ENCODE measurements at regions of chr12 and their contacts with region 1.

Region 1: GRCh38 chr12:116599285-116600136 is 40.3 kb downstream of the MAP1LC3B2 start:
- DNase-seq: peak; percentile 73
- H3K4me3 ChIP-seq: peak overlapping the region in 2 of 3 experiments; percentile 0 to 38
- H3K27ac ChIP-seq: peak overlapping the region; percentile 30
- H3K4me1 ChIP-seq: peaks cover 10% of the 10 kb centered on the region
- H3K27me3 ChIP-seq: no peaks in the 10 kb centered on the region
- CTCF ChIP-seq: peak; percentile 42 to 73
- POLR2A ChIP-seq: no peak

Region 2: DNA sequence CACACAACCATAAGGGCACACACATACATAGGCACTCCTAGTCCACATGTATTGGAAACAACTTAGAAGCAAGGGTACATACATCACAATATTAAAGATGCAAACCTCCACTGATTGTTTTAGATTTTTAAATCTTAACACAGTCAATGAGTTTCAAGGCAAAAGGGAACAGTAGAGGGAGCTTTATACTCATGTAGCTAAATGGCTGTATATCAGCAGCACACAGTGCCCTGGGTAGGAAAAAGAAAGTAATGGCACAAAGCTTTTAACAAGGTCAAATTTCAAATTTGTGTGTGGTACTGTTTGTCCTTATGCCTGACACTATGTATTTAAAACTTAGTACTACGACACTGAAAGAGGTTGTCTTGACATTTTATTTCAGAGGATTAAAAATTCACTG is 584.0 kb before region 1 on chr12:
- CTCF ChIA-PET with region 1: interaction called, 17 read pairs
- POLR2A ChIA-PET with region 1: no interaction called
- dilution Hi-C with region 1: no loop called
- intact Hi-C with region 1: loop called (anchors 5 kb)
- DNase-seq: peak; percentile 64
- H3K4me3 ChIP-seq: no peak overlapping the region
- H3K27ac ChIP-seq: no peak overlapping the region
- H3K4me1 ChIP-seq: no peaks in the 10 kb centered on the region
- H3K27me3 ChIP-seq: no peaks in the 10 kb centered on the region
- CTCF ChIP-seq: peak; percentile 21 to 34
- POLR2A ChIP-seq: no peak

Region 3: DNA sequence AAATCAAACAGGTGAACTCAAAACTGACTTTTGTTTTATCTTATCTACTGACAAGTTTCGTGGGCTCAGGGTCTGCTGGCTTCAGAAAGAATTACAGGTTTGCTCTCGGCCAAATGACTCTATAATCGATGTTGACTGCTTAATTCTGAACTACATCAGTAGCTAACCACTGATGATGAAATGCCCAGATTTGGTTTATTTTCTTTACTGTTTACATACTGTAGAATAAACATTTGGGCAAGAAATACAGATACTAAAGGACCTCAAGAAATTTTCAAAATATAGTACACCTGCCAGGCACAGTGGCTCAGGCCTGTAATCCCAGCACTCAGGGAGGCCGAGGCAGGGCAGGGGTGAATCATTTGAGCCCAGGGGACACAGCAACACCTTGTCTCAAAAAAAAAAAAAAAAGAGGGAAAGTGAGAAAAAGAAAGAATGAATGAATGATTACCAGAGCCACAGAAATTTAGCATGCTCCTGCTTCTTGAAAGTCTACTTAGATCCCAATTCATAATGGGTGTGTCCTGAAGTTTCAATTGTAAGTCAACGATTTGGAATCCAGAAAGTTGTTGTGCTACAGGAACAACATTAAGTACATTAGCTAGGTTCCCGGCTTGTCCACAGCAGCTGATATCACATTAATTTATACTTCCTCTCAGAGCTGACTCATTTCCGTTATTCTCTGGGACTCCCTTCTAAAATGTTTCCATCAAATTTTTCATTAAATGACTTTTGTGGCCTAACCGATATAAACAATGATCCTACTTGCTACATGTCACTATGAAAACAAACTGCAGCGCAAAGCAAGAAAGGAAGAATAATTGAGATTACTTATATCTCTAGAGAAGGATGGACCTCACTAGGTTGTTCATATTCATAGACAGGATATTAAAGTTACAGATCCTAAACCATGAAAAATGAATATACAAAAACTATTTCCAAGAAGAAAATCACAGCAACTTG is 456.3 kb before region 1 on chr12:
- CTCF ChIA-PET with region 1: interaction called, 36 read pairs
- POLR2A ChIA-PET with region 1: no interaction called
- dilution Hi-C with region 1: no loop called
- intact Hi-C with region 1: loop called (anchors 1 kb)
- DNase-seq: peak; percentile 97
- H3K4me3 ChIP-seq: peak overlapping the region in 1 of 3 experiments; percentile 18
- H3K27ac ChIP-seq: peak overlapping the region; percentile 99
- H3K4me1 ChIP-seq: peaks cover 28% of the 10 kb centered on the region
- H3K27me3 ChIP-seq: no peaks in the 10 kb centered on the region
- CTCF ChIP-seq: no peak
- POLR2A ChIP-seq: peak; percentile 25

Region 4: GRCh38 chr12:116455540-116456329 is 143.8 kb before region 1 on chr12:
- CTCF ChIA-PET with region 1: interaction called, 3 read pairs
- POLR2A ChIA-PET with region 1: no interaction called
- dilution Hi-C with region 1: no loop called
- intact Hi-C with region 1: loop called (anchors 1 kb)
- DNase-seq: peak; percentile 98
- H3K4me3 ChIP-seq: peak overlapping the region in 2 of 3 experiments; percentile 14 to 15
- H3K27ac ChIP-seq: peak overlapping the region; percentile 96
- H3K4me1 ChIP-seq: peaks cover 17% of the 10 kb centered on the region
- H3K27me3 ChIP-seq: no peaks in the 10 kb centered on the region
- CTCF ChIP-seq: no peak
- POLR2A ChIP-seq: no peak

Region 5: DNA sequence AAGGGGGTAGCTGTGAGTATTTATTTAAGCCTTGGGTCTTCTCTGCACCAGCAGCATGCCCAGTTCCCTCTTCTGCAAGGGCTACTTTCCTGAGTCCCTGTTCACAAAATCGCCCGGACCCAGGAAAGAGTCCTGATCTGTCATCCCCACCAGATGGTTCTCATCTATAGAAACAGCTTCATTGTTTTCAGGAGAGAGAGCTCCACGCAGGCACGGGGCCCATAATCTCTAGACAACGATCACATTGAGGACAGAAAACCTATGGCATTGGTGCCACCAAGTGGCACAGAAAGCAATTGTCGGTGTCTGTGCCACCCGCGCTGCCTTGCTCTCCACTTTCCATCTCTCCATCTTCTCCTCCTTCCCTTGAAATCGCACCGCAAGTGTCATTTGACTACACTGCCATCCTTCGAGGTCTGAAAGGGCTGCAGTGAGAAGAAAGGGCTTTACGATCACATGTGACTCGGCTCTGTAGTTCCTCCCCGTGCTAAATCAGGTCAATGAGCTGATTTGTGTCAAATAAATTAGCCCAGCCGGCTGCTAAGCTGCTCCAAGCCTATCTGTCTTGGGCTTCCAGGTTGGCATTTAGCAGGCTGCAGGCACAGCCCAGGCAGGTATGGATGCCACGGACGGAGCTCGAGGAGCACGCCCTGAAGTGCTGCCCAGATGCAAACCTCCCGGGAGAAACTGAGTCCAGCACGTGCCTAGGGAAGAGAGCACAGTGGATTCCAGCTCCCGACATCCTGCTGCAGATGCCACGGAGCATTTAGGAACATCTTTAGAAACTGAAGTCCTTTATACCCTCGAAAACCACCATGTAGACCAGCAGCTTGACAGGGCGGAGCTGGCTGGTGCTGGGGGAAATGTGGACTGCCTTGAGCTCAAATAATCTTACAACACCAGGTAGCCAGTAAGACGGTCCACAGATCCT is 109.6 kb after region 1 on chr12:
- CTCF ChIA-PET with region 1: no interaction called
- POLR2A ChIA-PET with region 1: no interaction called
- dilution Hi-C with region 1: no loop called
- intact Hi-C with region 1: loop called (anchors 5 kb)
- DNase-seq: peak; percentile 52
- H3K4me3 ChIP-seq: no peak overlapping the region
- H3K27ac ChIP-seq: no peak overlapping the region
- H3K4me1 ChIP-seq: no peaks in the 10 kb centered on the region
- H3K27me3 ChIP-seq: peaks cover 15% of the 10 kb centered on the region in 2 experiments
- CTCF ChIP-seq: peak; percentile 44 to 65
- POLR2A ChIP-seq: no peak

Region 6: GRCh38 chr12:116832353-116832752 is 232.8 kb after region 1 on chr12:
- CTCF ChIA-PET with region 1: no interaction called
- POLR2A ChIA-PET with region 1: no interaction called
- dilution Hi-C with region 1: no loop called
- intact Hi-C with region 1: no loop called
- DNase-seq: no peak
- H3K4me3 ChIP-seq: no peak overlapping the region
- H3K27ac ChIP-seq: no peak overlapping the region
- H3K4me1 ChIP-seq: no peaks in the 10 kb centered on the region
- H3K27me3 ChIP-seq: no peaks in the 10 kb centered on the region
- CTCF ChIP-seq: no peak
- POLR2A ChIP-seq: no peak